Caco-2 (cell line): ENCODE measurements at regions of chr1 and their contacts with region 1.

Region 1: GRCh38 chr1:160006312-160006940 is 25.4 kb downstream of the PIGM start:
- DNase-seq: peak; percentile 81 to 86
- H3K4me3 ChIP-seq: no peak overlapping the region
- H3K4me3 Mint-ChIP-seq: no peak overlapping the region
- H3K27ac Mint-ChIP-seq: no peak overlapping the region
- H3K4me1 ChIP-seq: no peaks in the 10 kb centered on the region; the same call in 1 of the 2 replicates
- H3K4me1 Mint-ChIP-seq: peaks cover 8% of the 10 kb centered on the region
- H3K27me3 ChIP-seq: no peaks in the 10 kb centered on the region
- H3K27me3 Mint-ChIP-seq: no peaks in the 10 kb centered on the region
- CTCF ChIP-seq: peak; percentile 94 to 98

Region 2: DNA sequence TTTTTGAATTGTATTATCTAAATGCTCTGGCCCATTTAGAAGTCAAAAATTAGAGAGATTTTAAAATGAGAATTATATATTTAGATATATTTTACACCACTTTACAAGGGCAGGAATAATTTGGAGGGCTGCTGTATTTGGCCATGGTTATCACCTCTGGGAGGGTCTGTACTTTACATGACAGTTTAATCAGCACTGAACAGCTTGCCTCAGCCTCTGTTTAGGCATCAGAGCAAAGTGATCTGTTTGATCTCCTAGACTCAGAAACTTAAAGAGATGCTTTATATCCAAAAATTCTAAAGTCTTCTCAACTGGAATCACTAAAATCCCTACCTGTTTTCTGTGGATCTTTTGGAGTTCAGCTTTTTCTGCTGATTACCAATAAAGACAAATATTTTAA is 1314.5 kb before region 1 on chr1:
- CTCF ChIA-PET with region 1: no interaction called
- POLR2A ChIA-PET with region 1: no interaction called
- intact Hi-C with region 1: no loop called
- DNase-seq: no peak
- H3K4me3 ChIP-seq: no peak overlapping the region
- H3K4me3 Mint-ChIP-seq: no peak overlapping the region
- H3K27ac Mint-ChIP-seq: no peak overlapping the region
- H3K4me1 ChIP-seq: no peaks in the 10 kb centered on the region
- H3K4me1 Mint-ChIP-seq: no peaks in the 10 kb centered on the region
- H3K27me3 ChIP-seq: no peaks in the 10 kb centered on the region
- H3K27me3 Mint-ChIP-seq: peaks cover 7% of the 10 kb centered on the region
- CTCF ChIP-seq: no peak

Region 3: DNA sequence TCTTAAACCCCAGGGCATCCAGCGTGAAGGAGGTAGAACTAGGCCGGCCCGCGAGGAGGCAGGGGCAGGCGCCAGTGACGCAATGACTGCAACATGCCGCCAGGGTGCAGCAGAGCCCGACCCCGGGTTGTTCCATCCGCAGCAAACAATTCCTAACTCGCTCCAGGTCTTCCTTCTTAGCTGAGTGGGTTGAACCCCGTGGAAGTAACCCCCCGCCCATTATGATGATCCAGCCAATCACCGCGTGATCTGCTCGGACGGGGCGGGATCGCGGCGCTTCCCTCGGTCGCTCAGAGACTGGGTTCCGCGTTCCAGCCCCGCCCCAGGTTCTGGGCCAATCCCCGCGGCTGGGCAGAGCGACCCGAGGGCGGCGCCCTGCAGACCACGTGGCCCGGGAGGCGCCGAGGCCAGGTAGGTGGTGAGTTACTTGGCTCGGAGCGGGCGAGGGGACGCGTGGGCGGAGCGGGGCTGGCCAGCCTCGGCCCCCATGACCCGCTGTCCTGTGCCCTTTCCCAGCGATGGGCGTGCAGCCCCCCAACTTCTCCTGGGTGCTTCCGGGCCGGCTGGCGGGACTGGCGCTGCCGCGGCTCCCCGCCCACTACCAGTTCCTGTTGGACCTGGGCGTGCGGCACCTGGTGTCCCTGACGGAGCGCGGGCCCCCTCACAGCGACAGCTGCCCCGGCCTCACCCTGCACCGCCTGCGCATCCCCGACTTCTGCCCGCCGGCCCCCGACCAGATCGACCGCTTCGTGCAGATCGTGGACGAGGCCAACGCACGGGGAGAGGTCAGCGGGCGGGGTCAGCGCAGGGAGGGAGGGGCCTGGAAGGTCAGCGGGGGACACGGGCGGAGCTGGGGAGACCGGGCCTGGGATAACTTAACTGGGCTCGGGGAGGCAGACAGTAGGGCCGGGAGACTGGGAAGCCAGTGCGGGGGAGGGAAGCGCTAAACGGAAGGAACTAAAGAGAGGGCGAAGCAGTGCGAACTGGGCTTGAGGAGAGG is 225.5 kb before region 1 on chr1 and contains the start of gene DUSP23:
- CTCF ChIA-PET with region 1: interaction called, 16 read pairs
- POLR2A ChIA-PET with region 1: no interaction called
- intact Hi-C with region 1: loop called (anchors 1 kb)
- DNase-seq: peak; percentile 97 to 99
- H3K4me3 ChIP-seq: peak within 1 kb of the TSS; percentile 63
- H3K4me3 Mint-ChIP-seq: peak within 1 kb of the TSS; percentile 90
- H3K27ac Mint-ChIP-seq: peak within 1 kb of the TSS; percentile 89
- H3K4me1 ChIP-seq: peaks cover 15% of the 10 kb centered on the region
- H3K4me1 Mint-ChIP-seq: peaks cover 16% of the 10 kb centered on the region
- H3K27me3 ChIP-seq: no peaks in the 10 kb centered on the region
- H3K27me3 Mint-ChIP-seq: no peaks in the 10 kb centered on the region
- CTCF ChIP-seq: peak; percentile 94 to 97
- total RNA-seq, gene DUSP23: 40.5 and 44.5 TPM in 2 replicates

Region 4: GRCh38 chr1:159829273-159829634 is 177.2 kb before region 1 on chr1:
- CTCF ChIA-PET with region 1: no interaction called
- POLR2A ChIA-PET with region 1: no interaction called
- intact Hi-C with region 1: no loop called
- DNase-seq: peak in 1 of 2 experiments; percentile 30
- H3K4me3 ChIP-seq: no peak overlapping the region
- H3K4me3 Mint-ChIP-seq: no peak overlapping the region
- H3K27ac Mint-ChIP-seq: no peak overlapping the region
- H3K4me1 ChIP-seq: peaks cover 5% of the 10 kb centered on the region; the same call in 1 of the 2 replicates
- H3K4me1 Mint-ChIP-seq: peaks cover 15% of the 10 kb centered on the region
- H3K27me3 ChIP-seq: no peaks in the 10 kb centered on the region
- H3K27me3 Mint-ChIP-seq: no peaks in the 10 kb centered on the region
- CTCF ChIP-seq: peak; percentile 18 to 50

Region 5: GRCh38 chr1:159839116-159839849 is 167.1 kb before region 1 on chr1:
- CTCF ChIA-PET with region 1: interaction called, 7 read pairs
- POLR2A ChIA-PET with region 1: no interaction called
- intact Hi-C with region 1: loop called (anchors 1 kb)
- DNase-seq: no peak
- H3K4me3 ChIP-seq: no peak overlapping the region
- H3K4me3 Mint-ChIP-seq: no peak overlapping the region
- H3K27ac Mint-ChIP-seq: no peak overlapping the region
- H3K4me1 ChIP-seq: no peaks in the 10 kb centered on the region
- H3K4me1 Mint-ChIP-seq: peaks cover 7% of the 10 kb centered on the region
- H3K27me3 ChIP-seq: no peaks in the 10 kb centered on the region
- H3K27me3 Mint-ChIP-seq: no peaks in the 10 kb centered on the region
- CTCF ChIP-seq: no peak

Region 6: GRCh38 chr1:159916184-159917051 is 90.0 kb before region 1 on chr1:
- CTCF ChIA-PET with region 1: interaction called, 12 read pairs
- POLR2A ChIA-PET with region 1: no interaction called
- intact Hi-C with region 1: no loop called
- DNase-seq: peak; percentile 90 to 94
- H3K4me3 ChIP-seq: no peak overlapping the region
- H3K4me3 Mint-ChIP-seq: peak overlapping the region; percentile 45
- H3K27ac Mint-ChIP-seq: peak overlapping the region; percentile 88
- H3K4me1 ChIP-seq: peaks cover 84% of the 10 kb centered on the region
- H3K4me1 Mint-ChIP-seq: peaks cover 67% of the 10 kb centered on the region
- H3K27me3 ChIP-seq: no peaks in the 10 kb centered on the region
- H3K27me3 Mint-ChIP-seq: no peaks in the 10 kb centered on the region
- CTCF ChIP-seq: no peak

Region 7: GRCh38 chr1:159945483-159946241 is 60.8 kb before region 1 on chr1 and contains the start of gene IGSF9:
- CTCF ChIA-PET with region 1: interaction called, 129 read pairs
- POLR2A ChIA-PET with region 1: no interaction called
- intact Hi-C with region 1: no loop called
- DNase-seq: peak; percentile 95 to 97
- H3K4me3 ChIP-seq: peak within 1 kb of the TSS; percentile 50
- H3K4me3 Mint-ChIP-seq: peak within 1 kb of the TSS; percentile 83
- H3K27ac Mint-ChIP-seq: peak within 1 kb of the TSS; percentile 68
- H3K4me1 ChIP-seq: peaks cover 56% of the 10 kb centered on the region
- H3K4me1 Mint-ChIP-seq: peaks cover 61% of the 10 kb centered on the region
- H3K27me3 ChIP-seq: no peaks in the 10 kb centered on the region
- H3K27me3 Mint-ChIP-seq: no peaks in the 10 kb centered on the region
- CTCF ChIP-seq: peak; percentile 74 to 80
- total RNA-seq, gene IGSF9: 19.6 and 21.2 TPM in 2 replicates

Region 8: GRCh38 chr1:159991513-159991912 is 14.9 kb before region 1 on chr1:
- CTCF ChIA-PET with region 1: interaction called, 10 read pairs
- POLR2A ChIA-PET with region 1: interaction called, 4 read pairs
- intact Hi-C with region 1: loop called (anchors 1 kb)
- DNase-seq: peak; percentile 49 to 63
- H3K4me3 ChIP-seq: no peak overlapping the region
- H3K4me3 Mint-ChIP-seq: peak overlapping the region; percentile 52
- H3K27ac Mint-ChIP-seq: peak overlapping the region; percentile 45
- H3K4me1 ChIP-seq: peaks cover 14% of the 10 kb centered on the region
- H3K4me1 Mint-ChIP-seq: peaks cover 8% of the 10 kb centered on the region
- H3K27me3 ChIP-seq: no peaks in the 10 kb centered on the region
- H3K27me3 Mint-ChIP-seq: no peaks in the 10 kb centered on the region
- CTCF ChIP-seq: no peak

Region 9: GRCh38 chr1:160205242-160206035 is 199.0 kb after region 1 on chr1 and contains the start of gene PEA15:
- CTCF ChIA-PET with region 1: no interaction called
- POLR2A ChIA-PET with region 1: no interaction called
- intact Hi-C with region 1: no loop called
- DNase-seq: peak; percentile 67 to 82
- H3K4me3 ChIP-seq: peak within 1 kb of the TSS; percentile 97
- H3K4me3 Mint-ChIP-seq: peak within 1 kb of the TSS; percentile 81
- H3K27ac Mint-ChIP-seq: peak within 1 kb of the TSS; percentile 71
- H3K4me1 ChIP-seq: peaks cover 10% of the 10 kb centered on the region
- H3K4me1 Mint-ChIP-seq: peaks cover 18% of the 10 kb centered on the region
- H3K27me3 ChIP-seq: no peaks in the 10 kb centered on the region
- H3K27me3 Mint-ChIP-seq: no peaks in the 10 kb centered on the region
- CTCF ChIP-seq: no peak
- total RNA-seq, gene PEA15: 84.9 and 85.1 TPM in 2 replicates